ENCODE measurements at regions of chr20 and their contacts with region 1.

Region 1: GRCh38 chr20:57351042-57351783 is at the start of gene RAE1:
- DNase-seq: peak; percentile 92
- ATAC-seq: peak; percentile 93
- H3K4me3 ChIP-seq: peak within 1 kb of the TSS; percentile 82
- H3K27ac ChIP-seq: peak within 1 kb of the TSS; percentile 89
- H3K4me1 ChIP-seq: peaks cover 3% of the 10 kb centered on the region; the same call in 1 of the 2 replicates
- H3K27me3 ChIP-seq: no peaks in the 10 kb centered on the region
- CTCF ChIP-seq: no peak
- POLR2A ChIP-seq: peak; percentile 91
- RAD21 ChIP-seq: no peak
- total RNA-seq, gene RAE1: 32.5 and 32.8 TPM in 2 replicates

Region 2: GRCh38 chr20:57089691-57090150 is 261.5 kb before region 1 on chr20:
- CTCF ChIA-PET with region 1: interaction called, 4 read pairs
- POLR2A ChIA-PET with region 1: no interaction called
- dilution Hi-C with region 1: no loop called
- in situ Hi-C with region 1: no loop called
- intact Hi-C with region 1: loop called (anchors 1 kb)
- DNase-seq: peak; percentile 5
- ATAC-seq: peak; percentile 85
- H3K4me3 ChIP-seq: no peak overlapping the region
- H3K27ac ChIP-seq: no peak overlapping the region
- H3K4me1 ChIP-seq: no peaks in the 10 kb centered on the region
- H3K27me3 ChIP-seq: no peaks in the 10 kb centered on the region
- CTCF ChIP-seq: peak; percentile 59
- POLR2A ChIP-seq: no peak
- RAD21 ChIP-seq: peak; percentile 56

Region 3: DNA sequence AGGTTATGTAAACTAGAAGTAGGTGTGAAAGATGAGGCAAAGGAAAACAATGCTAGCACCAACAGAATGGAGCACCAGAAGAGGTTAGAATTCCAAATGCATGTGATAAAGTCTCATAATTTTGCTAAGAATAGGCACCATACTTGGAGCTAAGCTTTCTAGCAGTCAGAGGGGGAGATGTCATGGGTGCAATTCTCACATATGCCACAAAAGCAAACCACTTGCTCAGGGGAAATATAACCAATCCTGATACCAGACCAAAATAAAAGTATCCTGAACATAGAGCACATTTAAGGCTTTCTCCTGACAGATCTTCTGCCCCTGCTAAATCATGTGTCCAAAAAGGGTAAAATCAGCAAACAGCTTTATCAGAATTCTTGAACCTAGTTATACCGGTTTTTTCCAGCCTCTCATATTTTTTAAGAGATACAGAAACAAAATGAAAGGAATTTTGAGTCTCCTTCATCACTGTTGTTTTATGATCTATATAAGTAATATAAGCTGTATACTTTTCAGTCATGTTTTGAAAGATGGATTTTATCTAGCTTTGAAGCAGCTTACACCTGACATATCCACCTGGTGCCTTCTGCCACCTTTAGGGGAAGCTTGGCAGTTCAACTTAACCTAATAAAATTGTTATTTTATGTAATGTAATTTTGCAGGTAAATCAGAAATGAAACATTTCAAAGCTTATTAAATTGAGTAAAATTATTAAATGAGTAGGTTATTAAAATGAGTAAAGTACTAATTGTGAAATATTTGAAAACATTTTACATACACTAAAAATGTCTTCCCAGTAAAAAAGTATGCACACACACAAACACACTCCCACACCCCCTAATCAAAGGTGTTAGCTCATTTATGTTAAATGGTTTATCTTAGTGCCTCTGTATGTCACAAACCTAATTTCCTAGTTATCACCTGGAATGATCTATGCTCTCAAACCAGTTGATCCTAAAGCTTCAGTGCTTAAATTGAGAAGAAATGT is 18.8 kb before region 1 on chr20:
- CTCF ChIA-PET with region 1: interaction called, 10 read pairs
- POLR2A ChIA-PET with region 1: no interaction called
- dilution Hi-C with region 1: no loop called
- in situ Hi-C with region 1: no loop called
- intact Hi-C with region 1: no loop called
- DNase-seq: no peak
- ATAC-seq: no peak
- H3K4me3 ChIP-seq: no peak overlapping the region
- H3K27ac ChIP-seq: no peak overlapping the region
- H3K4me1 ChIP-seq: no peaks in the 10 kb centered on the region
- H3K27me3 ChIP-seq: peaks cover 9% of the 10 kb centered on the region
- CTCF ChIP-seq: no peak
- POLR2A ChIP-seq: no peak
- RAD21 ChIP-seq: no peak

Measured in IMR-90 (cell line).